ENCODE measurements at regions of chr1 and their contacts with region 1.

Region 1: GRCh38 chr1:18100491-18101063 is 7.0 kb upstream of the IGSF21 start:
- DNase-seq: peak; percentile 61
- ATAC-seq: no peak
- H3K4me3 Mint-ChIP-seq: no peak overlapping the region
- H3K27ac Mint-ChIP-seq: no peak overlapping the region
- H3K4me1 Mint-ChIP-seq: no peaks in the 10 kb centered on the region
- H3K27me3 Mint-ChIP-seq: peaks cover 14% of the 10 kb centered on the region

Region 2: DNA sequence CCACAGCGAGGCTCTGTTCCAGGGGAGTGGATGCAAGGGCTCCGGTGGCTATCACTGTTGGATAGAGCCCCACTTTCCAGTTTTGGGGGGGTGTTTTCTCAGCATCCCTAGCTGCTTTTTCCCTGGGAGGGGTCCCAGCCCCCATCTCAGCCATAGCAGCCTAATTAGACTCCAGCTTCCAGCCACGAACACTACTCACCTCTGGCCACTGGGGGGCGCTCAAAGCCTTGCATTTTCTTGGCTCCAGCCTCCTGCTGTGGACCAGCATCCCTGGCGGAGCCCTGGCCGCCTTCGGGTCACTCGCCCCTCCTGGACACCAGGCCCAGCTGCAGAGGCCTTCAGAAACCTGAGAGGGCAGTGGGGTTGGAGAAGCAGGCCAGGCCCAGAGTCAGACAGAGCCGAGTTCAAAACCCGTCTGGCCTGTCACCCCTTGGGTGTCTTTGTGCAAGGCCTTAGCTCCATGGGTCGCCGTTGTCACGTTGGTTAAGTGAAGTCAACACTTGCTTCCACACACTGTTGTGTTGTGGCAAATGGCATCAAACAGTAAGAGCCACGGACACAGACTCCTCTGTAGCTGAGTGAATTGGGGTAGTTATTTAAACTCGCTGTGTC is 438.9 kb before region 1 on chr1:
- CTCF ChIA-PET with region 1: interaction called, 16 read pairs
- POLR2A ChIA-PET with region 1: no interaction called
- DNase-seq: peak; percentile 72
- ATAC-seq: peak; percentile 53
- H3K4me3 Mint-ChIP-seq: no peak overlapping the region
- H3K27ac Mint-ChIP-seq: no peak overlapping the region
- H3K4me1 Mint-ChIP-seq: no peaks in the 10 kb centered on the region
- H3K27me3 Mint-ChIP-seq: no peaks in the 10 kb centered on the region

Region 3: GRCh38 chr1:18032172-18032859 is 68.3 kb before region 1 on chr1:
- CTCF ChIA-PET with region 1: no interaction called
- POLR2A ChIA-PET with region 1: no interaction called
- DNase-seq: no peak
- ATAC-seq: no peak
- H3K4me3 Mint-ChIP-seq: no peak overlapping the region
- H3K27ac Mint-ChIP-seq: no peak overlapping the region
- H3K4me1 Mint-ChIP-seq: no peaks in the 10 kb centered on the region
- H3K27me3 Mint-ChIP-seq: peaks cover 4% of the 10 kb centered on the region